ENCODE measurements at regions of chr2 and their contacts with region 1.

Region 1: DNA sequence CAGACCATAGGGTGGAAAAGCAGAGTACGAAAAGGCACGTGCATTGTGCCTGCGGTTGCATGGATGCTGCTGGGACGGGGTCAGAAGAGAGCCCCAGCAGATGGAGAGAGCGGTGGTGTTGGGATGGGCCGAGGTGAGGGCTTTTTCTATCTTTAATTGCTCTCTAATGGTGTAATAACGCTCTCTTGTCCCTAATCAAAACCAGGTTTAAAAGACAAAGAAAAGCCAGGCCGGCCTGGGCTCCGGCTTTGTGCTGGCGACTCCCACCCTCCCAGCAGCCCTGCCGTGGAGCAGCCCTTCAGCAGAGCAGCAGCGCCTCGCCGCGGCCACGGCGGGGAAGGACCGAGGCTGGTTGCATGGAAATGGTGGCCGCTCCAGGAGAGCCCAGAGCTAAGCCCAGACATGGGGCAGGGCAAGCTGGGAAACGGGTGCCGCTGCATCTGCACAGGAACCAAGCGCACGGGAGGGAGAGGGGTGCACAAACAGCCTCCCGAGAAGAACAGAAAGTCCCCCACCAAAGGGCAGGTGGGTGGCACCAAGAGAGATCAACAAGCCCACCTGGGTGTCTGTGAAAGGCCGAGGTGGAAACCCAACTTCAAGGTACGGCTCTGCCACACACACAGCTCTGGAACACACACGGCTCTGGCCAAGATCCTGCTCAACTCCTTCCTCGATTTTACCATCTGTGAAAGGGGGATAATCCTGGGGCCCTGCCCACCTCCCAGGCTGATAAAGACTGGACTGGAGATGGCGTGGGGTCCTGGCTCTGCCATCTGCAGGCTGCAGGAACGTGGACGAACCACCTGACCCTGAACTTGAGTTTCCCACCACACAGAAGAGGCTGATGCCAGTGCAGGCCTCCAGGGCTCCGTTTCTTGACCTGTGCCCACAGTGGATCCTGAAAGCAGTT is 15.0 kb downstream of the HS1BP3 start:
- DNase-seq: peak; percentile 85
- H3K4me3 ChIP-seq: no peak overlapping the region
- H3K27ac ChIP-seq: peak overlapping the region; percentile 84 to 90
- H3K4me1 ChIP-seq: peaks cover 21% of the 10 kb centered on the region
- H3K27me3 ChIP-seq: no peaks in the 10 kb centered on the region
- CTCF ChIP-seq: peak; percentile 83 to 99 (median 94)
- POLR2A ChIP-seq: no peak

Region 2: DNA sequence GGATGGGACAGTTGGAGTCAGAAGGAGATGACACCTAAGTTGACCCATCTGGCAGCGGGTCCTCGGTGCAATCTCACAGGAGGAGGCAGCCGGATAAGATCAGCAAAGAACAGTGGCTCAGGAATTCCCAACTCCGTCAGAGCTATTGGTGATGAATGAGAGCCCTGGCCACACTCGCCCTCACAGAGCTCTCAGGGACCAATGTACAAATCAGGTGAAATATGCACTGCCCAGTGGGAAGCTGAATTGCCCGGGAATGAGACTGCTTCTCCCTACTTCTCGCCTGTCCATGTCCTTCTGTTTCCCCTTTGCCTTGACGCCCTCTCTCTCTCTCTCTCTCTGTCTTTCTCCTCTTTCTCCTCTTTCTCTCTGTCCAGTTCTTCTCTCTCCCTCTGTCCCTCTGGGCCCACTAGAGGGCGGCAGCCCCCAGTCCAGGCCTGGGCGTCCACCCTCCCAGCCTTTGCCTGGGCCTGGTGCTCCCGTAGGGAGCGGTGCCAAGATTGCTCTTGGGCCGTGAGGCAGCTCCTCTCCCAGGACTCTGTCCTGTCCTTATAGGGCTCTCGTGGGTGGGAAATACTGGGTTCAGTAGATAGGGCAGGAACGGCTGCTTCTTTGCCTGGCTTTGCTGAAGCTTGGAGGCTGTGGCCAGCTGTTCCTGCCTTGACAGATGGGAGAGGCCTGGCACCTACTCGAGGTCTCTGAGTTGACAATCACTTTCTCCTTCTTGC is 257.0 kb before region 1 on chr2:
- intact Hi-C with region 1: loop called (anchors 2 kb)
- DNase-seq: peak; percentile 62
- H3K4me3 ChIP-seq: no peak overlapping the region
- H3K27ac ChIP-seq: peak overlapping the region; percentile 13 to 28
- H3K4me1 ChIP-seq: no peaks in the 10 kb centered on the region
- H3K27me3 ChIP-seq: no peaks in the 10 kb centered on the region
- CTCF ChIP-seq: peak in 3 of 4 experiments; percentile 44 to 72 (median 66)
- POLR2A ChIP-seq: no peak

Region 3: DNA sequence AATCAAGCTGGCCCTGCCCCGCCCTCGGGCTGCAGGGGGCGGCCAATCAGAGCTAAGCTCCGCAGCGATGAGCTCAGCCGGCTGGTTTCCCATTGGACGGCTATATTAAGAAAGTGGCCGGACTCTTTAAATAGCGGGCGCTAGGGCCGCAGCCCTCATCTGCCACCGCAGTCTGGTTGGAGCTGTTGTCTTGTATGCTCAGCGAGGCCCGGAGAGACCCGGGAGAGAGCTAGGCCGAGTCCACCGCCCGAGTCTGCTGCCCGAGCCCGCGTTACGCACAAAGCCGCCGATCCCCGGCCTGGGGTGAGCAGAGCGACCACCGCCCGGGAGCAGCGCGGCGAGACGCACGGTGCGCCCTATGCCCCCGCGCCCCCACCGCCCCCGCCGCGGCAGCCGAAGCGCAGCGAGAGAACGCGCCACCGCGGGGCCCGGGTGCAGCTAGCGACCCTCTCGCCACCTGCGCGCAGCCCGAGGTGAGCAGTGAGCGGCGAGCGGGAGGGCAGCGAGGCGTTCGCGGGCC is 189.0 kb before region 1 on chr2 and contains the start of gene RHOB:
- intact Hi-C with region 1: loop called (anchors 2 kb)
- DNase-seq: peak; percentile 99
- H3K4me3 ChIP-seq: peak within 1 kb of the TSS; percentile 84 to 90
- H3K27ac ChIP-seq: peak within 1 kb of the TSS; percentile 98 to 100
- H3K4me1 ChIP-seq: peaks cover 6% of the 10 kb centered on the region
- H3K27me3 ChIP-seq: no peaks in the 10 kb centered on the region
- CTCF ChIP-seq: peak in 1 of 4 experiments; percentile 29
- POLR2A ChIP-seq: peak; percentile 98
- total RNA-seq, gene RHOB: 391 to 554 TPM

Region 4: DNA sequence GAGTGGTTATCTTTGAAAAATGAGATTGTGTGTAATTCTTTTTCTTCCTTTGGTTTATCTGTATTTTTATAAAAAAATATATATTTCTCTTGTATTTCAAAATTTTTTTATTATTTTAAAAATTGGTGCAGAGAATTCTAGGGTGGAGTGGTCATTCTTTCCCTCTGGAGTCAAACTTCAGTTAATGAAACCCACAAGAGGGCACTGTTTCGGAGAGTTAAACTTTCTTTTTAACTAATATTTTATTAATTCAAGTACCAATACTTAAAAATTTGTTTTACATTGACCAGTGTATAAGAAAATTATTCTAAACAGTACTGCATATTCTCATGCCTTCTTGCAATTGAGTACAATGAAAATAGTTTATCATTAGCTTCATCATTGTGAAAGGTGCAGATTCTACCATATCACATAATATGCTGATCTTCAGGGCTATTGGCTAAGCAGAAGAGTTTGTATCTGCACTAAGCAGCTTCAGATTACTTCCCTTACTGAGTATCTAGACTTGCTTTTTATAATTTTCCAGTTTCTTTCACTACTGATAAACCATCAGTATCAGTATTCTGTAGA is 35.1 kb before region 1 on chr2:
- intact Hi-C with region 1: loop called (anchors 2 kb)
- DNase-seq: no peak
- H3K4me3 ChIP-seq: no peak overlapping the region
- H3K27ac ChIP-seq: no peak overlapping the region
- H3K4me1 ChIP-seq: peaks cover 9% of the 10 kb centered on the region
- H3K27me3 ChIP-seq: no peaks in the 10 kb centered on the region
- CTCF ChIP-seq: peak in 2 of 4 experiments; percentile 32 to 36
- POLR2A ChIP-seq: no peak